Naive thymus-derived CD8-positive, alpha-beta T cell (primary cell): ENCODE measurements at regions of chr7 and their contacts with region 1.

Region 1: DNA sequence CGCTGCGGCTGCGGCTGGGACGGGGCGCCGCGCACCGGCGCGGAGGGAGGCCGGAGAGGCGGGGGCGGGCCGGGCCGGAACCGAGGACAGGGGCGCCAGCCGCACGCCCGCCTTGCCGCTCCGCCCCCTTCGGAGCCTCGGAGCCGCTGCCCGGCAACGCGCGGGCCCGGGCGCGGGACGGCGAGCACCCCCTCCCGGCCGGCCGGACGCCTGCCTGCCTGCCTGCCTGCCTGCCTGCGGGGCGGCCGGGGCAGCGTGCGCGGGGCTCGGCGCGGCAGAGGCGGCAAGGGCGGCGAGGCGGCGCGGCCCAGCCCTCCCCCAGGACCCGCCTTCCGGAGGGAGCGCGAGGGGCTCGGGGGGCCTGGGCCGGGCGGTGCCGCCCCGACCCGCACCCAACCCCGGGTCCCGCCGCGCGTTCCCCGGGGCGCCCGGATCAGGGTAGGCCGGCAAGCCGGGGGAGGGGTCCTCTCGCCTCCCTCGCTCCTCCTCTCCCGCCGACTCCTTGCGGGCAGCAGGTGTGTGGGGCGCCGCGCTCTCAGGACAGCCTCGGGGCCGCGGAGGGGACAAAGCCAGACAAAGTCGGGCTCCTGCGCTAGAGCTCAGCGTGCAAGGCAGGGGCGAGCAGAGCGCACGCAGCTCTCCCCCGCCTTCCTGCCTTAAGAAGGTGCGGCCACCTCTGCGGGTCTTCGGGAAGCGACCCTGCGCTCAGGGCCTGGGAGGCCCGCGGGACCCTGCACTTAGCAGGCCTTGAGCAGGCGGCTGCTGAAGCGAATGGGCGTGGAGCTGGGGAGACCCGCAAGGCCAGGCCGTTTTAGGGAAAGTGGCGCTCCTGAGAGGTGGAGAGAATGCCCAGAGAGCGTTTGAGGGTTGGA is at the start of gene KIAA1549:
- DNase-seq: peak in 9 of 10 donors; percentile 13 to 45 (median 33)
- ATAC-seq: peak; percentile 74 to 81
- H3K4me3 Mint-ChIP-seq: peak within 1 kb of the TSS; percentile 87 to 94 (median 91)
- H3K27ac Mint-ChIP-seq: peak within 1 kb of the TSS in 9 of 10 donors; percentile 42 to 91 (median 71)
- H3K4me1 Mint-ChIP-seq: peaks cover 13 to 21% (median 14%) of the 10 kb centered on the region in 4 donors
- H3K27me3 Mint-ChIP-seq: peaks cover 16 to 46% (median 24%) of the 10 kb centered on the region in 5 donors
- polyA plus RNA-seq, gene KIAA1549: not detected

Region 2: GRCh38 chr7:138809346-138809745 is 172.2 kb before region 1 on chr7:
- POLR2A ChIA-PET with region 1: no interaction called
- DNase-seq: no peak
- ATAC-seq: no peak
- H3K4me3 Mint-ChIP-seq: no peak overlapping the region
- H3K27ac Mint-ChIP-seq: peak overlapping the region in 1 of 10 donors; percentile 38
- H3K4me1 Mint-ChIP-seq: no peaks in the 10 kb centered on the region
- H3K27me3 Mint-ChIP-seq: no peaks in the 10 kb centered on the region

Region 3: GRCh38 chr7:138886501-138886917 is 95.1 kb before region 1 on chr7:
- POLR2A ChIA-PET with region 1: interaction called, 11 read pairs
- DNase-seq: peak in 8 of 10 donors; percentile 31 to 81 (median 63)
- ATAC-seq: peak; percentile 94 to 98
- H3K4me3 Mint-ChIP-seq: peak overlapping the region in 4 of 10 donors; percentile 11 to 76 (median 34)
- H3K27ac Mint-ChIP-seq: peak overlapping the region; percentile 2 to 93 (median 78)
- H3K4me1 Mint-ChIP-seq: peaks cover 4 to 19% (median 8%) of the 10 kb centered on the region in 4 donors
- H3K27me3 Mint-ChIP-seq: no peaks in the 10 kb centered on the region